HEK293 (cell line): ENCODE measurements at regions of chr12 and their contacts with region 1.

Region 1: DNA sequence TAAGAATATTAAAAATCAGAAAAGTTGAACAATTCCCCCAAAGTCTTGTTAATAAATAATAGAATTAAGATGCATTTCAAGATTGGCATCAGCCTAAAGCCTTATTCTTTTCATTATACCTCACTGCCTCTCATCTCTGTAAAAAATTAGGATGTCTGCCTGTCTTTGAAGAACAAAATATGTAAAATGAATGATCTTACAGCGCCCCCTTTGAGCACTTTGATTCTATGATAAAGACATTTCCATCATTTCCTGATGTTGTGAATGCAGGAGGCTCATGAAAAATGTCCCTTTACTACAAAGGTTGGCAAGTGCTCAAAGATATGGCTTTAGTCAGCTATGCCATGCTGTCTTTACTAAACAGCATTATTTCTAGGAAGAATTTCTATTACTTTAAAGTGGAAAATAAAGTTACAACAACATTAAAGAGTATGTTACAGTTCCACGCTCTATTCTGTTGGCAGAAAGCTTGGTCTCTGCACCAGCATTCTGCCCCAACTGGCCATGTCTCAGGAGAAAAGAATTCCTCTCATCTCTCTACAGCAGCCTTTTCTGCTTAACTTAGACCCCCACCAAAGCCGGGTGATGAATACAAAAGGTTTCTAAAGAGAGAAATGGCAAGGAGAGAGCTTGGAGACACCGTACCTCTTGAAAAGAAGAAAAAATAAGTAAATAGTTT is 95.1 kb downstream of the LLPH start:
- H3K4me3 ChIP-seq: no peak overlapping the region
- H3K27ac ChIP-seq: no peak overlapping the region
- H3K4me1 ChIP-seq: no peaks in the 10 kb centered on the region; the same call in 1 of the 2 replicates
- CTCF ChIP-seq: no peak

Region 2: DNA sequence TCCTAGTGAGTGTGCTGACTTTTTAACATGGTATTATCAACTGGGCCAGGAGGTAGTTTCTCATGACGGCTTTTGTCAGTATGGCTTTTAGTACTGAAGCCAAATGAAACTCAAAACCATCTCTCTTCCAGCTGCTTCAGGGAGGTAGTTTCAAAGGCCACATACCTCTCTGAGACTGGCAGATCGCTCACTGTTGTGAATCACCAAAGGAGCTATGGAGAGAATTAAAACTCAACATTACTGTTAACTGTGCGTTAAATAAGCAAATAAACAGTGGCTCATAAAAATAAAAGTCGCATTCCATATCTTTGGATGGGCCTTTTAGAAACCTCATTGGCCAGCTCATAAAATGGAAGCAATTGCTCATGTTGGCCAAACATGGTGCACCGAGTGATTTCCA is 70.1 kb before region 1 on chr12:
- CTCF ChIA-PET with region 1: no interaction called
- POLR2A ChIA-PET with region 1: no interaction called
- H3K4me3 ChIP-seq: no peak overlapping the region
- H3K27ac ChIP-seq: 0 out of 2 replicates have a peak overlapping the region, but pooled peaks have one; percentile 34
- H3K4me1 ChIP-seq: peaks cover 6% of the 10 kb centered on the region; the same call in 1 of the 2 replicates
- CTCF ChIP-seq: no peak

Region 3: DNA sequence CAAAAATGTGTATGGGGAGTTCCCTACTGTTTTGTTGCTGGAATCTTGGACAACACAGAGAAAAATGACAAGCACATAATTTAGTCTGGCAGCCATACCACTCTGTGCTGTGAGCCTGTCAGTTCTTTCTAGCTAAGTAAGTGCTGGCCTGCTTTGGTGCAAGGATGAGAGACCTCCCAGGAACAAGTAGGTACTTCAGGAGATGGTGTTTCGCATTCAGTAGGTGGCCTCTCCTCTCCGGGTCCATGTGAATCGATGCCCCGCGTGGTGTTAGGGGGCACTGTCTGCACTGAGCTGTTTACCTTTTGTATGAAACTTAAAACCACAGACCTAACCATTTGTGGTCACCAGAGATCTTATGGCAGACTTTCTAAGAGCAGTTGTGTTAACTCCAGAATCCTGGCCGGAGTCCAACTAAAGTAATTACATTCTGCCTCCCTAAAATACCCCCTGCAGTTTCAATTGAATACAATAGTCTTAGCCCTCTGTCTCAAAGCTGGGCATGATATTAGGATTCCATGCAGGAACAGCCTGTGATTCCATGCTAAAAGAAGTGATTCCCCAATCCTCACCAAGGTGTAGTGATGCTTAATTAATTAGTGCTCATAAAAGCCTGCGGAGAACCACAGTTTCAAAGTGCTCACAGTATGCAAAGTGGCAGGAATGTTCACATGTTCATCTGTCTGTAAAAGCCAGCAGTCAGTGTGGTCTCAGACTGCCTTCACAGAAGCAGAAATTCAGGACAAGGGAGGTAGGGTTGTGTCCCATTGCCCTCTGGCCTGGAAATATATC is 30.9 kb after region 1 on chr12:
- CTCF ChIA-PET with region 1: interaction called, 16 read pairs
- POLR2A ChIA-PET with region 1: no interaction called
- H3K4me3 ChIP-seq: no peak overlapping the region
- H3K27ac ChIP-seq: peak overlapping the region; percentile 77
- H3K4me1 ChIP-seq: peaks cover 46% of the 10 kb centered on the region
- CTCF ChIP-seq: peak; percentile 86; the same call in 1 of the 2 replicates

Region 4: GRCh38 chr12:66087365-66087943 is 52.0 kb after region 1 on chr12:
- CTCF ChIA-PET with region 1: interaction called, 13 read pairs
- POLR2A ChIA-PET with region 1: interaction called, 3 read pairs
- H3K4me3 ChIP-seq: no peak overlapping the region
- H3K27ac ChIP-seq: no peak overlapping the region
- H3K4me1 ChIP-seq: 0 out of 2 replicates have a peak, but pooled peaks cover under 1% of the 10 kb centered on the region
- CTCF ChIP-seq: peak; percentile 65

Region 5: GRCh38 chr12:66548338-66549049 is 513.1 kb after region 1 on chr12:
- CTCF ChIA-PET with region 1: no interaction called
- POLR2A ChIA-PET with region 1: no interaction called
- H3K4me3 ChIP-seq: no peak overlapping the region
- H3K27ac ChIP-seq: no peak overlapping the region
- H3K4me1 ChIP-seq: no peaks in the 10 kb centered on the region
- CTCF ChIP-seq: no peak